Thyroid gland (tissue), 4 donors: ENCODE measurements at regions of chr6 and their contacts with region 1.

Region 1: DNA sequence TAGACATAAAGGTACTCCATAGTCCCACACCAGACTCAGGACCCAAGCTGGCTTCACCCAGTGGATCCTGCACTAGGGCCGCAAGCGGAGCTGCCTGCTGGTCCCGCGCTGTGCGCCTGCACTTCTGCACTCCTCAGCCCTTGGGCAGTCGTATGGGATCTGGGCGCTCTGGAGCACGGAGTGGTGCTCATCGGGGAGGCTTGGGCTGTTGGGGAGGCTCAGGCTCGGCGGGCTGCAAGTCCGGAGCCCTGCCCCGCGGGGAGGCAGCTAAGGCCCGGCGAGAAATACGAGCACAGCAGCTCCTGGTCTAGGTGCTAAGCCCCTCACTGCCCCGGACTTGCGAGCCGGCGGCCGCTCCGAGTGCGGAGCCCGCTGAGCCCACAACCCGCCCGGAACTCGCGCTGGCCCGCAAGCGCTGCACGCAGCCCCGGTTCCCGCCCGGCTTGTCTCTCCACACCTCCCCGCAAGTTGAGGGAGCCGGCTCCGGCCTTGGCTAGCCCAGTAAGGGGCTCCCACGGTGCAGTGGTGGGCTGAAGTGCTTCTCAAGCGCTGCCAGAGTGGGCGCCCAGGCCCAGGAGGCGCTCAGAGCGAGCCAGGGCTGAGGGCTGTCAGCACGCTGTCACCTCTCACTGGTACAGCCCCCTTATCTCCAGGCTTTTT is 33.4 kb upstream of the GCNT2 start:
- DNase-seq: no peak
- H3K4me3 ChIP-seq: no peak overlapping the region
- H3K27ac ChIP-seq: no peak overlapping the region
- H3K4me1 ChIP-seq: no peaks in the 10 kb centered on the region
- H3K27me3 ChIP-seq: no peaks in the 10 kb centered on the region
- CTCF ChIP-seq: no peak
- POLR2A ChIP-seq: no peak

Region 2: GRCh38 chr6:9699888-9700287 is 787.9 kb before region 1 on chr6:
- intact Hi-C with region 1: no loop called
- DNase-seq: peak in 1 of 2 donors; percentile 13
- H3K4me3 ChIP-seq: no peak overlapping the region
- H3K27ac ChIP-seq: no peak overlapping the region
- H3K4me1 ChIP-seq: no peaks in the 10 kb centered on the region
- H3K27me3 ChIP-seq: no peaks in the 10 kb centered on the region
- CTCF ChIP-seq: no peak
- POLR2A ChIP-seq: no peak

Region 3: DNA sequence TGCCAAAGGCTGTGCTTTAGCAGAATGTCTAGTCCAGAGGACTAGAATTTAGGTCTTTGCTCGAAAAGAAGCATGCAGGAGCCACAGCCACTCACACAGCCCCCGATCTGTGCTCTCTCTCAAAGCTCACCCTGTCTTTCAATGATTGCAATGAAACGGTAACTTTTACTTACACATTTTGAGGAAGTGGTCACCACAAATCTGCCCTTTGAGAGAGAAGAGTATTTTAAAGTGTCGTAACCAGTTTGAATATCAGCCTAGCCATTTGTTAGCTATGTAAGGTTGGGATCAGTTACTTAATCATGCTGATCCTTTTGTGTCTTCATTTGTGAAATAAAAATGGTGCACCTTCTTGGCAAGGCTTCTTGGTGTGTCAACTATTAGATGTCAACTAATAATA is 281.9 kb before region 1 on chr6:
- intact Hi-C with region 1: no loop called
- DNase-seq: no peak
- H3K4me3 ChIP-seq: no peak overlapping the region
- H3K27ac ChIP-seq: no peak overlapping the region
- H3K4me1 ChIP-seq: peaks cover 0 to 5% of the 10 kb centered on the region in 2 donors
- H3K27me3 ChIP-seq: no peaks in the 10 kb centered on the region
- CTCF ChIP-seq: no peak
- POLR2A ChIP-seq: no peak

Region 4: GRCh38 chr6:10793695-10794094 is 305.9 kb after region 1 on chr6:
- intact Hi-C with region 1: loop called (anchors 10 kb)
- DNase-seq: no peak
- H3K4me3 ChIP-seq: no peak overlapping the region
- H3K27ac ChIP-seq: no peak overlapping the region
- H3K4me1 ChIP-seq: no peaks in the 10 kb centered on the region
- H3K27me3 ChIP-seq: no peaks in the 10 kb centered on the region
- CTCF ChIP-seq: no peak
- POLR2A ChIP-seq: no peak